Activated B cell treated with CpG ODN at 0.5 μM for 24 hours (primary cell): ENCODE measurements at regions of chr3 and their contacts with region 1.

Region 1: DNA sequence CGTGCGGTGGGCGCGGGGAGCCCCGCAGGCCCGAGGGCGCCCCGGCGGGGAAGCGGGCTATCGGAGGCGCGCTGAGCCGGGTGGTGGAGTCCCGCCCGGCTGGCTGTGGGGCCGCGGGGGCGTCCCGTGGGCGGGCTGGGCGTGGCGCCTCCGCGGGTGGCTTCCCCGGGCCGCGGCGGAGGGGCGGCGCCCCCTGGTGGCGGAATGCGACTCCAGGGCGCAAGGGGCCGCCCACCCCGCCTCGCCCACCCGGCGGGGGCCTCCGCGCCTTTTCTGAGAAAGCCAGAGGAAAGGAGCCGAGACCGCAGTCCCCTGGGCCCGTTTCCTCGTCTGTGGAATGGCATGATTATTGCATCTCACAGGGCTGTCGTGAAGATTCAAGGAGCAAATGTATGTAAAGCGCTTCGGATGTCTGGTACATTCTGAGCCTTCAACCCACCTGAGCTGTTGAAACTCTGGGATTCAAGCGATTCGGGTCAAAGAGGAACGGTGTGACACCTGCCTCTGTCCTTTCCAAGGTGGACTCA is 31.9 kb upstream of the RAB6B start:
- DNase-seq: peak; percentile 86
- ATAC-seq: peak; percentile 98
- H3K4me3 Mint-ChIP-seq: peak overlapping the region; percentile 77
- H3K27ac Mint-ChIP-seq: no peak overlapping the region
- H3K4me1 Mint-ChIP-seq: peaks cover 9% of the 10 kb centered on the region
- H3K27me3 Mint-ChIP-seq: peaks cover 16% of the 10 kb centered on the region
- CTCF ChIP-seq: peak; percentile 23

Region 2: DNA sequence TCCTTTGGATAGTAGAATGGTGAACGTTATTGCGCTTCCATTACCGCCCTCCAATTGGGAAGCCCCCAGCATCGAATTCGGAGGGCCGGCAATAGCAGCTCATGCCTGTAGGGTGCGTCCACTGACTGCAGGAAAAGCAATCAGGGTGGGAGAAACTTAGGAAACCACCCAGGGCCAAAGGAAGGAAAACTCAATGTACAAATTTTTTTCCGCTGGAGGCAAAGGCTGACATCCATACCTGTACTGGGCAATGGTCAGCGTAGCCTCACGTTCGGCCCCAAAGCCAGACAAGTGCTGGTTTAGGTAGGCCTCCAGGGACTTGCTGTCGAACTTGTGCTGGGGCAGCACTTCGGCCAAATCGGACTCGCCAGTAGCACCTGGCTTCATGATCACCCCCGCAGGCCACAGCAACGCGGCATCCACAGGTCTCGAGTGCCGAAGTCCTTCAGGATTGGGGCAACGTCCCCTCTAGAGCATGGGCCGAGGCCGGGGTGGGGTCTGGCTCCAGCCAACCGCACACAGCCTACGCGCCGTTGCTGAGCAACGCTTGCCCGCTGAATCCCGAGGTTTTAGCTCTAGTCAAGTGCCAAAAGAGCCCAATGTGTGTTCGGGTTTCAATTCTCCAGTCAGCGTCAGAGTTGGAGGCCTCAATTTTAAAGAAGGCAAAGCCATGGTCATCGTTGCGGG is 1268.1 kb before region 1 on chr3 and contains the start of gene ACAD11:
- CTCF ChIA-PET with region 1: no interaction called
- POLR2A ChIA-PET with region 1: no interaction called
- intact Hi-C with region 1: loop called (anchors 5 kb)
- DNase-seq: peak; percentile 55
- ATAC-seq: peak; percentile 74
- H3K4me3 Mint-ChIP-seq: peak within 1 kb of the TSS; percentile 97
- H3K27ac Mint-ChIP-seq: peak within 1 kb of the TSS; percentile 93
- H3K4me1 Mint-ChIP-seq: peaks cover 35% of the 10 kb centered on the region
- H3K27me3 Mint-ChIP-seq: no peaks in the 10 kb centered on the region
- CTCF ChIP-seq: no peak
- total RNA-seq, gene ACAD11: 16.4 and 24.0 TPM in 2 replicates

Region 3: DNA sequence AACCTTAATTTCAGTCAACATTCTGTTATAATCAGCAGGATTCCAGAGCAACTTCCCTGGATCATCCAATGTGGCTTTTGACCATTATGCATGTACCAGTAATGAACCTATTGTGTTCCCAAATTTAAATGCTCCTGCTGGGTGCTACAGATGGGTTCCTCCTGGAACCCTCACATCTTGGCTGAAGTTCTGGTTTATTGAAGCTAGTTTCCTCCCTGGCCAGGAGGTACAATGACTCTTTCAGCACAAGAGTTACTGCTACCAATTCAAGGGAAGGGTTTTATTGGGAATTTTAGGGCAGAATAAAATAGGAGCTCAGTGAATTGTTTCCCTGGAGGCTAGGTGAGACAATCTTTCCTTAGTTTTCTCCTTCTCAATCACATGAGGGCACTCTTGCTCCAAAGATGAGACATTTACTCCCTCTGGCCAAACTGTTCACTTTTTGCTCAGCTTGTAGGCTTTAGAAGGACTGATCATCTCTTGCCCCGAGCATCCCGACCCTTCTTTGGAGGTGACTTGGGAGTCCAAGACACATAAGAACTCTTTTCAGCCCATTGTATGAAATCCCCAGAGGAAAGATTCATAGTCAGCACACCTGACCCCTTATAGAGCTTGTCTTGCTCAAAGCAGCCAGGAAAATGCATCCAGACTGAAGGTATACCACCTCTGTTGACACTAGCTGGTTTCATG is 1196.6 kb before region 1 on chr3:
- CTCF ChIA-PET with region 1: interaction called, 9 read pairs
- POLR2A ChIA-PET with region 1: no interaction called
- intact Hi-C with region 1: loop called (anchors 1 kb)
- DNase-seq: no peak
- ATAC-seq: no peak
- H3K4me3 Mint-ChIP-seq: no peak overlapping the region
- H3K27ac Mint-ChIP-seq: no peak overlapping the region
- H3K4me1 Mint-ChIP-seq: peaks cover 4% of the 10 kb centered on the region
- H3K27me3 Mint-ChIP-seq: peaks cover 10% of the 10 kb centered on the region
- CTCF ChIP-seq: no peak

Region 4: DNA sequence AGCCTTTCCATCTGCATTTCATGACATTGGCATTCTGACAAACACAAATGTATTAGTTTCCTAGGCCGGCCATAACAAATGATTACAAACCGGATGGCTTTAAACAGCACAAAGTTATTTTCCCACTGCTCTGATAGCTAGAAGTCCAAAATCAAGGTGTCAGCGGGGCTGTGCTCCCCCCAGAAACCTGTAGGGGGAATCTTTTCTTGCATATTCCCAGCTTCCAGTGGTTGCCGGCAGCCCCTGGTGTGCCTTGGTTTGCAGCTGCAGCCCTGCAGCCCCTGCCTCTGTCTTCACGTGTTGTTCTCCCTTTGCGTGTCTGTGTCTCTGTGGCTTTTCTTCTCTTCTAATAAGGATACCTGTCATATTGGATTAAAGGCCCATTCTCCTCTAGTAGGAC is 433.1 kb before region 1 on chr3:
- CTCF ChIA-PET with region 1: no interaction called
- POLR2A ChIA-PET with region 1: no interaction called
- intact Hi-C with region 1: loop called (anchors 5 kb)
- DNase-seq: no peak
- ATAC-seq: no peak
- H3K4me3 Mint-ChIP-seq: no peak overlapping the region
- H3K27ac Mint-ChIP-seq: no peak overlapping the region
- H3K4me1 Mint-ChIP-seq: peaks cover 35% of the 10 kb centered on the region
- H3K27me3 Mint-ChIP-seq: no peaks in the 10 kb centered on the region
- CTCF ChIP-seq: no peak

Region 5: GRCh38 chr3:133661454-133662277 is 265.9 kb before region 1 on chr3 and contains the start of gene TOPBP1:
- CTCF ChIA-PET with region 1: interaction called, 4 read pairs
- POLR2A ChIA-PET with region 1: no interaction called
- intact Hi-C with region 1: loop called (anchors 1 kb)
- DNase-seq: peak; percentile 76
- ATAC-seq: peak; percentile 86
- H3K4me3 Mint-ChIP-seq: peak within 1 kb of the TSS; percentile 98
- H3K27ac Mint-ChIP-seq: peak within 1 kb of the TSS; percentile 95
- H3K4me1 Mint-ChIP-seq: peaks cover 34% of the 10 kb centered on the region
- H3K27me3 Mint-ChIP-seq: no peaks in the 10 kb centered on the region
- CTCF ChIP-seq: no peak
- total RNA-seq, gene TOPBP1: 45.8 and 49.9 TPM in 2 replicates

Region 6: DNA sequence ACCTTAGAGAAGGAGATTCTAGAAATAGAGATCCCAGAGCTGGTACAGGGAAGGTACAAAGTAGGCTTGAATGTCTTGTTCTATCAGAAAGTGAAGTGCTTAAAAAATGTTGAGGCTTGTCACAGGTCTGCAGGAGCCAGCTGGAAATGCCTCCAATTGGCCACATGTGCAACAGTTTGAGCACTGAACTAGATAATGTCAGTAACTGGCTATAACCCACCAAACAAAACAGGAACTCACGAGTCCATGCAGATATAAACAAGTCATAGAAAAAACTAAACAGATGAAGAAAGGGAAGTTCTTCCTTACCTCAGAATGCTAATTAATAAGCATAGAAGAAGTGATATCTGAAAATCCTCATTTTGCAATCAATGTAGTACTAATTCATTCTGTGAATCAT is 193.3 kb before region 1 on chr3:
- CTCF ChIA-PET with region 1: no interaction called
- POLR2A ChIA-PET with region 1: no interaction called
- intact Hi-C with region 1: no loop called
- DNase-seq: no peak
- ATAC-seq: no peak
- H3K4me3 Mint-ChIP-seq: no peak overlapping the region
- H3K27ac Mint-ChIP-seq: no peak overlapping the region
- H3K4me1 Mint-ChIP-seq: no peaks in the 10 kb centered on the region
- H3K27me3 Mint-ChIP-seq: peaks cover 34% of the 10 kb centered on the region
- CTCF ChIP-seq: no peak

Region 7: GRCh38 chr3:133821767-133822638 is 105.6 kb before region 1 on chr3:
- CTCF ChIA-PET with region 1: interaction called, 6 read pairs
- POLR2A ChIA-PET with region 1: no interaction called
- intact Hi-C with region 1: loop called (anchors 1 kb)
- DNase-seq: no peak
- ATAC-seq: no peak
- H3K4me3 Mint-ChIP-seq: no peak overlapping the region
- H3K27ac Mint-ChIP-seq: no peak overlapping the region
- H3K4me1 Mint-ChIP-seq: no peaks in the 10 kb centered on the region
- H3K27me3 Mint-ChIP-seq: no peaks in the 10 kb centered on the region
- CTCF ChIP-seq: no peak

Region 8: DNA sequence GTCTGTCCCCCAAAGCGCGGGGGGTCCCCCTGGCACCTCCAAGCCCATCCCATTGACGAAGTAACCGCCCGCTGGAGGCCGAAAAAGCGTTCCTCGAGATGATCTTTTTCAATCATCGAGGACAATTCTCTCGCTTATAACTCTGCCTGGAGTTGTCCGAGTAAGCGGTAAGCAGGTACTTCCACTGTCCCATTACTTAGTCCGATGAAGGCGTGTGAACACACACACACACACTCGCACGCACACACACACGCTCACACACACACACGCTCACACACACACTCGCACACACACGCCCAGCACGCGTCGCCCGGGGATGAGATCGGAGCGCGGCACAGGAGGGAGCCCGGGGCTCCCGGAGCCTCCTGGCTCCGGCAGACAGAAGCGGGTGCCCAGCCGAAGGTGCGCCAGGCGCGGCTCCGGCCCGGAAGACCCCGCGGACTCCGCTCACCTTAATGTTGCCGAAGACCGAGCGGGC is 101.7 kb after region 1 on chr3:
- CTCF ChIA-PET with region 1: no interaction called
- POLR2A ChIA-PET with region 1: no interaction called
- intact Hi-C with region 1: no loop called
- DNase-seq: no peak
- ATAC-seq: no peak
- H3K4me3 Mint-ChIP-seq: no peak overlapping the region
- H3K27ac Mint-ChIP-seq: no peak overlapping the region
- H3K4me1 Mint-ChIP-seq: peaks cover 6% of the 10 kb centered on the region
- H3K27me3 Mint-ChIP-seq: peaks cover 35% of the 10 kb centered on the region
- CTCF ChIP-seq: no peak

Region 9: GRCh38 chr3:134918441-134918840 is 990.8 kb after region 1 on chr3:
- CTCF ChIA-PET with region 1: no interaction called
- POLR2A ChIA-PET with region 1: no interaction called
- intact Hi-C with region 1: no loop called
- DNase-seq: no peak
- ATAC-seq: no peak
- H3K4me3 Mint-ChIP-seq: no peak overlapping the region
- H3K27ac Mint-ChIP-seq: no peak overlapping the region
- H3K4me1 Mint-ChIP-seq: no peaks in the 10 kb centered on the region
- H3K27me3 Mint-ChIP-seq: no peaks in the 10 kb centered on the region
- CTCF ChIP-seq: no peak